GM10248 (cell line): ENCODE measurements at regions of chr5 and their contacts with region 1.

Region 1: DNA sequence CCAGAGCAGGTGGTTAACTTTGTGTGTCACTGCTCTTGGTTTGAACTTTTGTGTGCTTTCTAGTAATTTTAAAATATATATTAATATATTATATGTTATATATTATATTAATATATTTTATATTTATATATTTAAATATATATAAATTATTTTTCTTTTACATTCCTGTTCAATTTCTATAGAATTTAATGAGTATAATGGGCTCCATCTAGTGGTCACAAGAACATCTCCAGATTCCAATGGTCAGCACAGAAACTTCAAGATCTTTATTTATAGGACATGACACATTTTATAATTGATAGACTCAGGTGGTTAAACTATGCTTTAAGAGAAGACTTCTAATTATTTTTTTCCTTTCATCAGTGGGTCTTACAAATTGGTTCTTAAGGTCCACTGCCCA is 39.1 kb downstream of the COL23A1 start:
- DNase-seq: no peak
- CTCF ChIP-seq: peak; percentile 35

Region 2: DNA sequence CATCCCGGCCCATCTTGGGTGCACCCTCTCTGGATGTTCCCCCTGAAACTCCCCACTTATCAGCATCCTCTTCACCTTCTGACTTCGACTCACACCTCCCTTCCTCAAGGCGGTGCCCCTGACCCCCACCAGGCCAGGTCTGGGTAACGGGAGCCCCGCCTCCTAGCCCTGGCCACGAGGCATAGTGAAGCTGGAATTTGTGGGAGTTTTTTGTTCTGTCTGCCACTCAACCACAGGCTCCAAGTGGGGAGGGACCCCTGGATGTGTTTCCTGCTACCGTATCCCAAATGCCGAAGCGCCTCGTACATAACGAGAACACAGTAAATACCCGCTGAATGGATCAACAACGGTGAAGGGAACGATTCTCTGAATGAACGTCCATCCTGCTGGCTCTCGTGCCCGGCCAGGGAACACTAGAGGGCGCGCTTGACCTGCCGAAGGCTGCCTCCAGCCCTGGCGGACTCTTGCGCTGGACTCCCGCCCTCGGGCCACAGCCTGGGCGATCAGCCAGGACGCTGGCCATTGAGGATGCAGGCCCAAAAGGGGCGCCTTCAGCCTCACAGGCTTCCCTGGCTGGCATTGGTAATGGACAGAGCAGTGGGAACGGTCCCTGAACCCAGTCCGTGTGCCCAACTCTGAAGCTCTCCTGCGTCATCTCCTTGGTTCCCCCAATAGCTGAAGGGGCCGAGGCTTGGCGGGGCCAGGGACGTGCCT is 271.2 kb before region 1 on chr5:
- CTCF ChIA-PET with region 1: interaction called, 41 read pairs
- POLR2A ChIA-PET with region 1: no interaction called
- DNase-seq: peak; percentile 89
- CTCF ChIP-seq: peak; percentile 97